ENCODE measurements at regions of chr4 and their contacts with region 1.

Region 1: GRCh38 chr4:85826060-85826678 is 351.2 kb downstream of the ARHGAP24 start:
- DNase-seq: no peak

Region 2: GRCh38 chr4:86032476-86033022 is 206.4 kb after region 1 on chr4:
- intact Hi-C with region 1: loop called (anchors 10 kb)
- DNase-seq: no peak

Measured in cardiac septum (tissue), 1 donor.